Dendritic cell treated with granulocyte-macrophage colony-stimulating factor and Interleukin-4, amounts not matched to agents 40 ng/mL and 50 ng/mL, for 4 days (primary cell): ENCODE measurements at regions of chr17 and their contacts with region 1.

Region 1: DNA sequence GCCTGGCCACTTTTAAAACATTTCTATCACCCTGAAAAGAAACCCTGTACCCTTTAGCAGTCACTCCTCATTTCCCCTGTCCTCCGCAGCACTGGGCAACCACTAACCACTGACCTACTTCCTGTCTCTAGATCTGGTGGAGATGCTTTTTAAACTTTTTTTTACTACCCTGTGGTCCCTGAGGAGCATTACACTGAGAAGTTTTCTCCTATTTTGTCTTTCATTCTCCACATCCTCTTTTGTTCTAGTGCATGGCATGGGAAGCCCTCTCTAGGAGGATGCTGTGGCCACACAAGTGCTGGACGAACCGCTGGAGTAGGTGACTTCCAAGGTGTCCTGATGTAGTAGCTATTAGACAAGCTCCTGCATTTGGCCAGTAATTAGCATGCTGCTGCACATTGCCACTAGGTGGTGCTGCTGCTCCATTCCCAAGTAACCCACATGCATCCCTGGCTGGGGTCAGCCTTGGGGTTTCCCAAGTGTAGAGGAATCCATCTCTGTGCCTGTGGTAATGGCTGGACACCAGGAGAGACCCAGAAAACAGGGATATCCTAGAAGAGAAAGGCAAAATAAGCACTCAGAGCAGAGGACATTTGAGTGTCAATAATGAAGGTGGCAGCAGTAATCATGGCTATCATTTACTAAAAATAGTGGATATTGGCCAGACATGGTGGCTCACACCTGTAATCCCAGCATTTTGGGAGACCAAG is 143.8 kb upstream of the CRHR1 start:
- H3K4me3 Mint-ChIP-seq: no peak overlapping the region
- H3K27ac Mint-ChIP-seq: no peak overlapping the region
- H3K4me1 Mint-ChIP-seq: peaks cover 4% of the 10 kb centered on the region
- H3K27me3 Mint-ChIP-seq: peaks cover 20% of the 10 kb centered on the region

Region 2: GRCh38 chr17:45828628-45829027 is 188.3 kb after region 1 on chr17:
- intact Hi-C with region 1: loop called (anchors 1 kb)
- H3K4me3 Mint-ChIP-seq: no peak overlapping the region
- H3K27ac Mint-ChIP-seq: no peak overlapping the region
- H3K4me1 Mint-ChIP-seq: no peaks in the 10 kb centered on the region
- H3K27me3 Mint-ChIP-seq: peaks cover 12% of the 10 kb centered on the region

Region 3: GRCh38 chr17:45852535-45853297 is 212.4 kb after region 1 on chr17:
- intact Hi-C with region 1: loop called (anchors 5 kb)
- H3K4me3 Mint-ChIP-seq: no peak overlapping the region
- H3K27ac Mint-ChIP-seq: no peak overlapping the region
- H3K4me1 Mint-ChIP-seq: no peaks in the 10 kb centered on the region
- H3K27me3 Mint-ChIP-seq: peaks cover 26% of the 10 kb centered on the region